ENCODE measurements at regions of chr6 and their contacts with region 1.

Region 1: DNA sequence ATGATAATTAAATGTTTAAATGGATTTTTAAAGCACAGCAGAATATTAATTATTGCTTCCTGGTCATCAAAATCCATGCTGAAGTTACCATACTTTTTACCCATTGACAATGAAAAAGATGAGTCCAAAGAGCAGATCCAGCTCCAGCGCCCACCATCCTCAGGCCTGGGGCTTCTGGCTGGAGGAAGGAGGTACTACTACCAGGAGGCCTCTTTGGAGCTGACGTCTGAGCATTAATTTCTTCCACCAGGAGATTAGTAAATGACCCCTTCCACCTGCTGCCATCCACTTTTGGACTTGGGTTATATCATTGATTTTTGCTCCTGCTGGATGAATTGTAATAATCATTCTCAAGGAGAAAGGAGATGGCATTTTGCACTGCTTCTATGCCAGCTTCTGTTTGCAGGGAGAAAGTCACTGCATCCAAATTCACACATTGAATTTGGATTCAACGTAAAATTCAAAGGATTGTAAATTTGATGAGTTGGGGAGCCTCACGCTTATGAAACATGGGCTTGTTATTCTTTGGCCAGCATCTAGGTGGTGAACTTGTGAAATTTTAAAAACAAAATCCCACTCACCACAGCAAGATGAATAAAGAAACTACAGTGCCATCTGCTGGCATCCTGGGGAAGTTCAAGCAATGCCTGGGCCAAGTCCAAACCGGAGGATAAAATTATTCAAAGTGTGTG is 121.8 kb downstream of the SASH1 start:
- DNase-seq: peak in 4 of 5 donors; percentile 55 to 69 (median 62)
- ATAC-seq: peak; percentile 44 to 75 (median 71)
- H3K4me3 ChIP-seq: no peak overlapping the region
- H3K27ac ChIP-seq: peak overlapping the region in 10 of 12 donors; percentile 2 to 69 (median 54)
- H3K4me1 ChIP-seq: peaks cover 0 to 78% (median 51%) of the 10 kb centered on the region in 12 donors
- H3K27me3 ChIP-seq: no peaks in the 10 kb centered on the region
- CTCF ChIP-seq: peak; percentile 86 to 98 (median 94)
- POLR2A ChIP-seq: no peak

Region 2: GRCh38 chr6:147506704-147507114 is 957.8 kb before region 1 on chr6:
- intact Hi-C with region 1: loop called in 5 of 10 experiments (anchors 5 to 10 kb)
- DNase-seq: peak; percentile 69 to 81 (median 73)
- ATAC-seq: peak; percentile 80 to 86 (median 82)
- H3K4me3 ChIP-seq: peak overlapping the region; percentile 56 to 85 (median 66)
- H3K27ac ChIP-seq: no peak overlapping the region
- H3K4me1 ChIP-seq: peaks cover 0 to 35% (median 13%) of the 10 kb centered on the region in 12 donors
- H3K27me3 ChIP-seq: peaks cover 0 to 66% (median 4%) of the 10 kb centered on the region in 9 donors
- CTCF ChIP-seq: peak; percentile 66 to 91 (median 87)
- POLR2A ChIP-seq: no peak

Region 3: DNA sequence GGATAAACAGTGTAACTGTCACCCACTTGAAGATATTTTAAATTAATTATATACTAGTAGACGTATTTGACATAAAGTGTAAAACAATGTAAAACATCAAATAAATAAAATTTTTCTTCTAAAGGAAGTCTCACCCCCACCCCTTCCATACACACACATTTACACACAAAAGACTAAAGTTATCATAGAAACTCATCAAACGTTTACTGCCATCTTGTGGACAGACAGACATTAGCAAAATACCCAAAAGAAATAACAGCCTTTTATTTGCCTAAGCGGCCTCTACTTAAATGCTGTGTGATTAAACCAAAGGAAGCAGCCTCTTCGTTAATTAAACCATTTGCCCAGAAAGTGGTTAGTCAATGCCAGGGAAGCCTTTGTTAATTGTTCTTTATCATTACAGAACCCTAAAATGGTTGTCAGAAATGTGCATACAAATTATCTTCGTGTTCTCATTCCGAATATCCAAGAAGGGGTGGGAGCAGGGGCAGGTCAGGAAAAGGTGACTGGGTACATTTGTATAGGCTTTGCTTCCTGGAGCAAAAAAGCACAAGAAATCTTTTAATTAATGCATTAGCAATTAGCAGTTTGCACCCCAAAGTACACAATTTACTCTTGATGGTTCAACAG is 298.0 kb before region 1 on chr6:
- intact Hi-C with region 1: loop called in 1 of 10 experiments (anchors 5 kb)
- DNase-seq: no peak
- ATAC-seq: peak in 2 of 4 donors; percentile 44 to 46
- H3K4me3 ChIP-seq: no peak overlapping the region
- H3K27ac ChIP-seq: no peak overlapping the region
- H3K4me1 ChIP-seq: no peaks in the 10 kb centered on the region
- H3K27me3 ChIP-seq: no peaks in the 10 kb centered on the region
- CTCF ChIP-seq: peak; percentile 53 to 78 (median 74)
- POLR2A ChIP-seq: no peak

Region 4: GRCh38 chr6:148177589-148178233 is 286.8 kb before region 1 on chr6:
- intact Hi-C with region 1: loop called (anchors 1 to 5 kb)
- DNase-seq: peak; percentile 53 to 74 (median 66)
- ATAC-seq: peak in 3 of 4 donors; percentile 41 to 60 (median 50)
- H3K4me3 ChIP-seq: no peak overlapping the region
- H3K27ac ChIP-seq: no peak overlapping the region
- H3K4me1 ChIP-seq: peaks cover 0 to 3% (median 0%) of the 10 kb centered on the region in 12 donors
- H3K27me3 ChIP-seq: no peaks in the 10 kb centered on the region
- CTCF ChIP-seq: peak; percentile 75 to 90 (median 86)
- POLR2A ChIP-seq: no peak

Region 5: GRCh38 chr6:148250975-148251685 is 213.3 kb before region 1 on chr6:
- intact Hi-C with region 1: loop called in 3 of 10 experiments (anchors 5 to 10 kb)
- DNase-seq: no peak
- ATAC-seq: peak in 3 of 4 donors; percentile 56 to 82 (median 65)
- H3K4me3 ChIP-seq: no peak overlapping the region
- H3K27ac ChIP-seq: peak overlapping the region in 1 of 12 donors; percentile 14
- H3K4me1 ChIP-seq: peaks cover 0 to 32% (median 1%) of the 10 kb centered on the region in 12 donors
- H3K27me3 ChIP-seq: no peaks in the 10 kb centered on the region
- CTCF ChIP-seq: peak in 11 of 12 donors; percentile 15 to 62 (median 45)
- POLR2A ChIP-seq: no peak

Region 6: DNA sequence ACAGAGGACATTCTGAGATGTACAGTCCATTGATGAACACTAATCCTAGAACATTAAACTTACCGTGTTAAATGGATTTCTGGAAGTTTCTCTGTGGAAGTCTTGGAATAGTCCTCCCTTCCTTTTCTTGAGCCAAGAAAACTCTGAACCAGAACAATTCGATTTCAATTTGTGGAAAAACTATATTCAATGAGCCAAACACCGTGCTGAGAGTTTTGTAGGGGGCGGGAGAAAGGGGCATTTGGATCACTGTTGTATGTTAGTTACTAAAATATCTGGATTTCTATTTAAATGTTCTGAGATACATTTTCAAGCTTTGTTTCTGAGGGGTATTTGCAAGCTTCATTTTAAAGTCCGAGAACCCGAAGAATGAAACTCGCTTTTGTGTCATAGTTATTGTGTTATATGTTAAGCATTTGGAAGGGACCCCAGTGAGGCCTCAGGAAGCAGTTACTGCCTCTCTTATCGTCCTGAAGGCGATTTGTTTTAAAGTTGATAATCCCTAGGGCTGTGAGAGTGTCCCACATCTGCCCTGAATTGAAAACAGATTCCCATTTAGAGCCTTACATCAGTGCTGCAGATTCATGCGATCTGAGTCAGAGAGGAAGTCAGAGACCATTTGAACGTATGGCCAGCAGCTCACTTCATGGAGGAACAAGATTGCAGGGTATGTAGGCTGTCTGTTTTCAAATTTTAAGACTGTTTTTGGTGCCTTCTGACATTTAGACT is 192.6 kb before region 1 on chr6:
- intact Hi-C with region 1: loop called in 1 of 10 experiments (anchors 10 kb)
- DNase-seq: peak in 1 of 5 donors; percentile 11
- ATAC-seq: peak in 2 of 4 donors; percentile 51 to 68
- H3K4me3 ChIP-seq: peak overlapping the region in 11 of 12 donors; percentile 5 to 56 (median 32)
- H3K27ac ChIP-seq: peak overlapping the region in 9 of 12 donors; percentile 13 to 66 (median 58)
- H3K4me1 ChIP-seq: peaks cover 0 to 12% (median 0%) of the 10 kb centered on the region in 12 donors
- H3K27me3 ChIP-seq: peaks cover 0 to 5% (median 0%) of the 10 kb centered on the region in 9 donors
- CTCF ChIP-seq: no peak
- POLR2A ChIP-seq: no peak

Region 7: GRCh38 chr6:148342357-148343046 is 122.0 kb before region 1 on chr6 and contains the start of gene SASH1:
- intact Hi-C with region 1: loop called in 9 of 10 experiments (anchors 2 to 10 kb)
- DNase-seq: peak; percentile 68 to 83 (median 73)
- ATAC-seq: peak; percentile 75 to 88 (median 86)
- H3K4me3 ChIP-seq: peak within 1 kb of the TSS; percentile 45 to 89 (median 81)
- H3K27ac ChIP-seq: peak within 1 kb of the TSS; percentile 74 to 98 (median 92)
- H3K4me1 ChIP-seq: peaks cover 0 to 56% (median 26%) of the 10 kb centered on the region in 12 donors
- H3K27me3 ChIP-seq: no peaks in the 10 kb centered on the region
- CTCF ChIP-seq: no peak
- POLR2A ChIP-seq: peak in 1 of 2 donors; percentile 50
- total RNA-seq, gene SASH1: 19.0 to 47.5 (median 29.8) TPM